ENCODE measurements at regions of chr5 and their contacts with region 1.

Region 1: GRCh38 chr5:31825518-31826068 is 186.7 kb downstream of the PDZD2 start:
- DNase-seq: peak; percentile 78
- H3K4me3 ChIP-seq: no peak overlapping the region
- H3K27ac ChIP-seq: no peak overlapping the region
- H3K4me1 ChIP-seq: no peaks in the 10 kb centered on the region
- H3K27me3 ChIP-seq: peaks cover 20% of the 10 kb centered on the region

Region 2: GRCh38 chr5:30856242-30856641 is 969.4 kb before region 1 on chr5:
- in situ Hi-C with region 1: no loop called
- DNase-seq: no peak
- H3K4me3 ChIP-seq: no peak overlapping the region
- H3K27ac ChIP-seq: no peak overlapping the region
- H3K4me1 ChIP-seq: no peaks in the 10 kb centered on the region
- H3K27me3 ChIP-seq: no peaks in the 10 kb centered on the region

Region 3: DNA sequence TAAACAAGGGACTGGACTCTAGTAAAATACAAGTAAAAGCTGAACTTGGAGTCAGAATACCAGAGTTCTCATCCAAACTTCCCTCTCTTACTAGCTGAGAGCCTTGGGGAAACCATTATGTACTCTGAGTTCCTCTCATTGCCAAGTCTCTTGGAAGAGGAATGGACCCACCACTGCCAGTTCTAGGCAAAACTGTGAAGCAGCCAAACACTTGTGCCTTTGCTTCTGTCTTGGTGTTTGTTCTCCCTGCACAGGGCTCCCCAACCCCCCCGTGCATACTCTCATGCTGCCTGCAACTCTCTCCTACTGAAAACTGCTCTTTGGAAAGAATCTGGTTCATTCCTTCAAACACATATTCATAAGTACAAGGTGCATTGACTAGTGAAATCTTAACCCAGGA is 84.1 kb before region 1 on chr5:
- in situ Hi-C with region 1: no loop called
- DNase-seq: no peak
- H3K4me3 ChIP-seq: no peak overlapping the region
- H3K27ac ChIP-seq: no peak overlapping the region
- H3K4me1 ChIP-seq: no peaks in the 10 kb centered on the region
- H3K27me3 ChIP-seq: no peaks in the 10 kb centered on the region

Region 4: GRCh38 chr5:32092938-32093812 is 267.6 kb after region 1 on chr5:
- in situ Hi-C with region 1: loop called (anchors 5 kb)
- DNase-seq: peak; percentile 86
- H3K4me3 ChIP-seq: no peak overlapping the region
- H3K27ac ChIP-seq: no peak overlapping the region
- H3K4me1 ChIP-seq: no peaks in the 10 kb centered on the region
- H3K27me3 ChIP-seq: no peaks in the 10 kb centered on the region

Region 5: DNA sequence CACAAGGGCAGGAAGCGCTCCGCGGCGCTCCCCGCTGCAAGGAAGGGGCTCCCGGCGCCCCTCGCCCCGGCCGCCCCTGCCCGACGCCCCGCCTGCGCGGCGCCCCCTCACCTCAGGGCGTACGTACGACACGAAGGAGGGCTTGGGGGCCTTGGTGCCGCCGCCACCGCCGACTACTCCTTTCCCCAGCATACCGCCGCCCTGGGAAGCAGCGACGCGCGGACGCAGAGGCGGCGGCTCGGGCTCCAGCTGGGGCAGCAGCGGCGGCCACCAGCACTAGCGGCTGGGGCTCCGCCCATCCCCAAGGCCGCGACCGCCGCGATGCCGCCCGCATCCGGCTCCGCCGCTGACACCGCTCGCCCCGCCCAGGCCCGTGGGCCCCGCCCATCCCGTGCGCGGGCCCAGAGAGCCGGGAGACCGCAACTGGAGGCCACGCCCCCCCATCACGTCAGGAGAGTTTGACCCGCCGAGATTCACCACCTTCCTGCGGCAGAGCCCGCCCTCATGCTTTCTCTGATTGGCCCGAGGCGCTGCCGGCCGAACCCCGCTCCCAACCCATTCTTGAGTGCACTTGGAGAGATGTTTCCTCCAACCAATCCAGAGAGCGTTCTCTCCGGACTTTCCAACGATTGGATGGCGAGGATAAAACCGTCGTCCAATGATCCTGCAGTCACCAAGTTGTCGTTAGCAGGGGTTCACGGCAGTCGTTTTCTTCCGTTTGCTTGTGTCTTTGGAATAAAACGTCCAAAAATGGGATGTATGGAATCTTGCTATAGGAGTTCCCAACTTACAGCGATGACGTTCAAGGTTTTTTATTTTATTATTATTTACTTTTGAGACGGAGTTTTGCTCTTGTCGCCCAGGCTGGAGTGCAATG is 487.3 kb after region 1 on chr5 and contains the start of gene MTMR12:
- in situ Hi-C with region 1: loop called (anchors 25 kb)
- DNase-seq: peak; percentile 100
- H3K4me3 ChIP-seq: peak within 1 kb of the TSS; percentile 89
- H3K27ac ChIP-seq: peak within 1 kb of the TSS; percentile 85
- H3K4me1 ChIP-seq: peaks cover 18% of the 10 kb centered on the region
- H3K27me3 ChIP-seq: no peaks in the 10 kb centered on the region
- total RNA-seq, gene MTMR12: 13.4 and 48.8 TPM in 2 replicates

Measured in GM23248 (cell line).